Activated CD4-positive, alpha-beta memory T cell treated with anti-CD3 and anti-CD28 coated beads for 36 hours (primary cell): ENCODE measurements at regions of chr2 and their contacts with region 1.

Region 1: GRCh38 chr2:148926291-148926961 is 51.4 kb downstream of the KIF5C start:
- DNase-seq: peak; percentile 68
- H3K4me3 Mint-ChIP-seq: peak overlapping the region; percentile 77
- H3K27ac Mint-ChIP-seq: peak overlapping the region; percentile 61
- H3K4me1 Mint-ChIP-seq: peaks cover 18% of the 10 kb centered on the region
- H3K27me3 Mint-ChIP-seq: no peaks in the 10 kb centered on the region

Region 2: DNA sequence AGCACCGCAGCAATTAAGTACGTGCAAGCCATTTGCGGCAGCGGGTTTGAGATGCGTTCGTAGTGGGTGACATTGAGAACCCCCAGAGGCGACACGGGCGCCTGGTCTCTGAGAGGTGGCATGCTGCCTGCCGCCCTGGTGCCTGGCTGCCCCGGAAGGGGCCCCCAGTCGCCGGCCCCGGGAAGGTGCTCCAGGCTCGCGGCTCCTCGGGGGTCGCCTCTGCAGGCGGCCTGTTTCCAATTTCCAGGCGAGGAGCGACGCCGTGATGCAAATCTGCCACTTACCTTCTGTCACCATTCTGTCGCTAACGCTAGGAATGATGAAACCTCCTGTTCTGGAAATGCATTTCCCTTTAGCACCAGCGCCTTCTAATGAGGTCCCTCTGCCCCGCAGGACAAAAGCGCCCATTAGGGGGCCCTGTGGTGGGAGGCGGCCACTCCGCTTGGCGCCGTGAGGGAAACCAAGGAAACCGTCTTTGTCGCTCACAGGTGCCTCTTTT is 38.4 kb before region 1 on chr2:
- CTCF ChIA-PET with region 1: no interaction called
- POLR2A ChIA-PET with region 1: no interaction called
- intact Hi-C with region 1: loop called (anchors 2 kb)
- DNase-seq: peak; percentile 28
- H3K4me3 Mint-ChIP-seq: peak overlapping the region; percentile 77
- H3K27ac Mint-ChIP-seq: no peak overlapping the region
- H3K4me1 Mint-ChIP-seq: peaks cover 13% of the 10 kb centered on the region
- H3K27me3 Mint-ChIP-seq: peaks cover 12% of the 10 kb centered on the region